ENCODE measurements at regions of chr6 and their contacts with region 1.

Region 1: DNA sequence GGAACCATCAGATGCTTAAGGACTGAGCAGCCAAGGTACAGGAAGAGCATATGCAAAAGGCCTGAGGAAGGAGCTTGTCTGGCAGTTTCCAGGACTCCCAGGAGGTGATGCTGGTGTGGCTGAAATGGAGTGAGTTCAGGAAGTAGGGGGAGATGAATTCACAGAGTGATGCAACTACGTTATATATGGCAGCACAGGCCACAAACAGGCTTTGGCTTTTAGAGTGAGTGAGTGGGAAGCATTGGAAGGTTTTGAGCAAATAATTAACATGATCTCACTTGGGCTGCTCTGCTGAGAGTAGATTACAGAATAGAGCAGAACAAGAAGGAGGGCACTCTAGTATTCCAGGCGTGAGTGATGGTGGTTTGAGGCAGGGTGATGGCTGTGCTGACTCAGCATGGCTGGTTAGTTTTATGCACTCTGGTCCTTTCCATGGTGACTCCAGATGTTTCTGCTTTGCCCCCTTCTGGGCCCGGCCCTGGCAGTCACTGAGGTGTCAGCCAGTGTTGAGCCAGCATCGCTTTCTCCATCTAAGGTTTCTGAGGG is 6.5 kb downstream of the BTN2A2 start:
- DNase-seq: no peak
- H3K4me3 ChIP-seq: no peak overlapping the region
- H3K27ac ChIP-seq: no peak overlapping the region
- H3K4me1 ChIP-seq: peaks cover 0 to 5% (median 4%) of the 10 kb centered on the region in 4 experiments; a peak in 3 of 7 replicates
- H3K27me3 ChIP-seq: no peaks in the 10 kb centered on the region
- CTCF ChIP-seq: peak in 2 of 3 experiments; percentile 1 to 17; a peak in 2 of 4 replicates
- EP300 ChIP-seq: no peak
- POLR2A ChIP-seq: no peak
- RAD21 ChIP-seq: peak; percentile 26 to 39; a peak in 3 of 4 replicates

Region 2: GRCh38 chr6:26408828-26409730 is 19.7 kb after region 1 on chr6:
- CTCF ChIA-PET with region 1: interaction called, 14 read pairs
- POLR2A ChIA-PET with region 1: interaction called, 3 read pairs
- DNase-seq: peak in 1 of 2 experiments; percentile 58
- H3K4me3 ChIP-seq: no peak overlapping the region
- H3K27ac ChIP-seq: no peak overlapping the region
- H3K4me1 ChIP-seq: peaks cover 0 to 6% (median 3%) of the 10 kb centered on the region in 4 experiments; a peak in 3 of 7 replicates
- H3K27me3 ChIP-seq: no peaks in the 10 kb centered on the region
- CTCF ChIP-seq: peak; percentile 21 to 40 (median 25); a peak in 2 of 4 replicates
- EP300 ChIP-seq: no peak
- POLR2A ChIP-seq: no peak
- RAD21 ChIP-seq: peak in 1 of 2 experiments; percentile 31; a peak in 1 of 4 replicates

Measured in H1 (cell line).